ENCODE measurements at regions of chr15 and their contacts with region 1.

Region 1: GRCh38 chr15:95826412-95827195 is 503.9 kb upstream of the NR2F2 start:
- DNase-seq: peak in 5 of 9 donors; percentile 6 to 29 (median 15)
- ATAC-seq: no peak
- H3K4me3 ChIP-seq: no peak overlapping the region
- H3K4me3 Mint-ChIP-seq: no peak overlapping the region
- H3K27ac ChIP-seq: no peak overlapping the region
- H3K27ac Mint-ChIP-seq: no peak overlapping the region
- H3K4me1 ChIP-seq: no peaks in the 10 kb centered on the region
- H3K4me1 Mint-ChIP-seq: peaks cover 0 to 4% (median 0%) of the 10 kb centered on the region in 7 donors
- H3K27me3 ChIP-seq: no peaks in the 10 kb centered on the region
- H3K27me3 Mint-ChIP-seq: peaks cover 0 to 40% (median 0%) of the 10 kb centered on the region in 5 donors

Region 2: GRCh38 chr15:95410757-95411156 is 415.8 kb before region 1 on chr15:
- CTCF ChIA-PET with region 1: no interaction called
- POLR2A ChIA-PET with region 1: no interaction called
- intact Hi-C with region 1: no loop called
- DNase-seq: no peak
- ATAC-seq: no peak
- H3K4me3 ChIP-seq: no peak overlapping the region
- H3K4me3 Mint-ChIP-seq: no peak overlapping the region
- H3K27ac ChIP-seq: no peak overlapping the region
- H3K27ac Mint-ChIP-seq: no peak overlapping the region
- H3K4me1 ChIP-seq: peaks cover 0 to 10% of the 10 kb centered on the region in 2 donors
- H3K4me1 Mint-ChIP-seq: peaks cover 0 to 25% (median 0%) of the 10 kb centered on the region in 7 donors
- H3K27me3 ChIP-seq: no peaks in the 10 kb centered on the region
- H3K27me3 Mint-ChIP-seq: no peaks in the 10 kb centered on the region

Region 3: GRCh38 chr15:95869920-95870319 is 43.3 kb after region 1 on chr15:
- CTCF ChIA-PET with region 1: no interaction called
- POLR2A ChIA-PET with region 1: no interaction called
- intact Hi-C with region 1: loop called in 1 of 2 experiments (anchors 5 kb)
- DNase-seq: no peak
- ATAC-seq: no peak
- H3K4me3 ChIP-seq: no peak overlapping the region
- H3K4me3 Mint-ChIP-seq: peak overlapping the region in 7 of 10 donors; percentile 6 to 77 (median 29)
- H3K27ac ChIP-seq: no peak overlapping the region
- H3K27ac Mint-ChIP-seq: peak overlapping the region in 3 of 9 donors; percentile 7 to 79 (median 37)
- H3K4me1 ChIP-seq: peaks cover 0 to 14% of the 10 kb centered on the region in 2 donors
- H3K4me1 Mint-ChIP-seq: peaks cover 6 to 66% (median 23%) of the 10 kb centered on the region in 7 donors
- H3K27me3 ChIP-seq: no peaks in the 10 kb centered on the region
- H3K27me3 Mint-ChIP-seq: peaks cover 0 to 37% (median 4%) of the 10 kb centered on the region in 5 donors

Measured in naive thymus-derived CD4-positive, alpha-beta T cell (primary cell).